OCI-LY7 (cell line): ENCODE measurements at regions of chr3 and their contacts with region 1.

Region 1: GRCh38 chr3:90184861-90185260 is 1077.4 kb downstream of the EPHA3 start:
- DNase-seq: no peak
- H3K4me3 ChIP-seq: no peak overlapping the region
- H3K27ac ChIP-seq: no peak overlapping the region
- H3K4me1 ChIP-seq: no peaks in the 10 kb centered on the region
- CTCF ChIP-seq: no peak

Region 2: GRCh38 chr3:88209356-88209755 is 1975.5 kb before region 1 on chr3:
- CTCF ChIA-PET with region 1: no interaction called
- POLR2A ChIA-PET with region 1: no interaction called
- intact Hi-C with region 1: loop called (anchors 5 kb)
- DNase-seq: no peak
- H3K4me3 ChIP-seq: no peak overlapping the region
- H3K27ac ChIP-seq: no peak overlapping the region
- H3K4me1 ChIP-seq: no peaks in the 10 kb centered on the region
- CTCF ChIP-seq: no peak

Region 3: GRCh38 chr3:89314454-89315098 is 870.3 kb before region 1 on chr3:
- CTCF ChIA-PET with region 1: no interaction called
- POLR2A ChIA-PET with region 1: no interaction called
- intact Hi-C with region 1: loop called (anchors 5 kb)
- DNase-seq: peak; percentile 3
- H3K4me3 ChIP-seq: no peak overlapping the region
- H3K27ac ChIP-seq: no peak overlapping the region
- H3K4me1 ChIP-seq: no peaks in the 10 kb centered on the region
- CTCF ChIP-seq: peak; percentile 45; the same call in 1 of the 2 replicates

Region 4: DNA sequence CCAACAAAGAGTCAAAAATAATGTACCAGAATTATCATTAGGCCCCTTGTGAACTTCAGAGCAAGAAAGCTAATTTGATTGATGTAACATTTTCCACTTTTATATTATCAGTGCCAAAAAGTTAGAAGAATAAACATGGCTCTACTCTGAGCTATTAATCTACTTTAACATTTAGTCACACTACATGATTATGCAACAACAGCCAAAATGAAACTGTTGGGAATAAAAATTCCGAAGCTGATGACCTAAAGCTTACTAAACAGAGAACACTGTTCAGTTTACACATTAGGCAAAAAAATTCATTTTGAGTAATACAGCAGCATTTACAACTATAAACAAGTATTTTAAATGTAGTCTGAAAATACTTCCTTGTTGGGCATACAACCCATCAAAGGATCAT is 56.6 kb after region 1 on chr3:
- CTCF ChIA-PET with region 1: no interaction called
- POLR2A ChIA-PET with region 1: no interaction called
- intact Hi-C with region 1: no loop called
- DNase-seq: no peak
- H3K4me3 ChIP-seq: no peak overlapping the region
- H3K27ac ChIP-seq: no peak overlapping the region
- H3K4me1 ChIP-seq: no peaks in the 10 kb centered on the region
- CTCF ChIP-seq: no peak

Region 5: DNA sequence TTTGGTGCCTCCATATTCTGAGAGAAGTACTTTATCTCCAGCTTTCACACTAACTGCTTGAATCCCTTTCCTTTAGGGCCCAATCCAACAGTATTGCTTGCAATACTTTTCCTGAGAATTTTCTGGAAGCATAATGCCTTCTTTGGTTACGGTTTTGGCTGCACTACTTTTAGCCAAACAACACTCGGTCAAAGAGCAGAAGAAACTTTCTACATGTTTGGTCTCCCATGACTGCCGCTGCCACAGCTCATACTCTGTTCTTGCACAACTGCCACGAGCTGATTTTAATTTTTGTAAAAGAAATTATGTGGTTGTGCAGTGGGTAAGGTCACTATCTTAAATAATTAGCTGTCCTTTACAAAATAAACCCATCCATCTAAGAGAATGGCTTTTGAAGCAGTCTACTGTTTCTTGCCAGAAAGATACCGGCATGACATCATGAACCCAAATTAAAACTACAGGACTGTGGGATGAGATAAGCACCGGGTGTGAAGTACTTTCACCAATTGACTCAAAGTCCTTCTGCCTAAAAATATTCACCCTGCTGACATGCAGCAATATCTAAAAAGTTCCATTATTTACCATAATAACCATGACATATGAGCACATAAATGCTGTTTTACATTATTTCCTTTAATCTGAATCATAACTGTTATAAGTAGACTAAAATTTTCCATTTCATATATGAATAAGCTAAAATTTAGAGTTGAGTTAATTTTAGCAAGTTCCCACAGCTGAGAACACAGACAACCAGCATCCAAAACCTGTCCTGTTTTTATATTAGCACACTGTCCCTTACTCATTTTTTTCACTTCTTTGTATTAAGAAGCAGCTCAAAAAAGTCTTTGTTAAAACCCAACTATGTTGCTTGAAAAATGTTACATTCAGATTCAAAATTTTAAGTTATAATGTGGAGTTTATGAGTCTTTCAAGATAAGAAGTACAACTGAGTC is 76.9 kb after region 1 on chr3:
- CTCF ChIA-PET with region 1: no interaction called
- POLR2A ChIA-PET with region 1: no interaction called
- intact Hi-C with region 1: no loop called
- DNase-seq: no peak
- H3K4me3 ChIP-seq: no peak overlapping the region
- H3K27ac ChIP-seq: no peak overlapping the region
- H3K4me1 ChIP-seq: no peaks in the 10 kb centered on the region
- CTCF ChIP-seq: no peak